ENCODE measurements at regions of chr16 and their contacts with region 1.

Region 1: GRCh38 chr16:77675464-77676324 is 46.6 kb upstream of the NUDT7 start:
- DNase-seq: peak; percentile 75
- H3K4me3 ChIP-seq: no peak overlapping the region
- H3K27ac ChIP-seq: no peak overlapping the region
- H3K4me1 ChIP-seq: no peaks in the 10 kb centered on the region
- H3K27me3 ChIP-seq: no peaks in the 10 kb centered on the region
- CTCF ChIP-seq: peak; percentile 80

Region 2: DNA sequence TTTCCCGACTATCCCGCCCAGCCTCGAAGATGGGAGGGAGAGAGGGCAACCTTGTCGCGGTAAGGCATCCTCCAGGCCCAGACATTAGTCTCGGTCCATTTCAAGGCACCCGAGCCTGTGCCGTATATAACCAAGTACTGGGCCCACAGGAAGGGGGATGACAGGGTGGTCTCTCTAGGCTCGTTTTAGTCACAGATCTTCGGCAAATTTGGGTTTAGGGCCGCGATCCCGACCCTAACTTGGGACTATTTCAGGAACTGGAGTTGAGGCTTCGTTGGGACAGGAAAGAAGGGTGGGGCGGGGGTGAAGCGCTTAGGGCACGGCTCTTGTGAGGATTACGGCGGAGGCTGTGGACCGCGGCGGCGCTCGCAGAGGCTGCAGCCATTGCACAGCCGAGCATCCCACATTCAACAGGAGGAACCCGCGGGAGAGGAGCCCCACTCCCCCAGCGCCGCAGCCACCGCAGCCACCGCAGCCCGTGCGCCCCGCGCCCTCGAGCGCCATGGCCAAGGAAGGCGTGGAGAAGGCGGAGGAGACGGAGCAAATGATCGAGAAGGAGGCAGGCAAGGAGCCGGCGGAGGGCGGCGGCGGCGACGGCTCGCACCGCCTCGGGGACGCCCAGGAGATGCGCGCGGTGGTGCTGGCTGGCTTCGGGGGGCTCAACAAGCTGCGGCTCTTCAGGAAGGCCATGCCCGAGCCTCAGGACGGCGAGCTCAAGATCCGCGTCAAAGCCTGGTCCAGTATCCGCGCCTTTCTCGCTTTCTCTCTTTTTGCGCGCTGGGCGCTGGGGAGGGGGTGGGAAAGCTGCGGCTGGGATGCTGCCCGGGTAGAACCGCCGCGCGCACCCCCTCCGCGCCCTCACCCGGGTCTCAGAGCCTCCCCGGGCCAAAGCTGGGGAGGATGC is 112.7 kb after region 1 on chr16 and contains the start of gene VAT1L:
- intact Hi-C with region 1: loop called (anchors 5 kb)
- DNase-seq: peak; percentile 24
- H3K4me3 ChIP-seq: peak within 1 kb of the TSS; percentile 30
- H3K27ac ChIP-seq: no peak within 1 kb of the TSS
- H3K4me1 ChIP-seq: no peaks in the 10 kb centered on the region
- H3K27me3 ChIP-seq: peaks cover 32% of the 10 kb centered on the region
- CTCF ChIP-seq: no peak
- total RNA-seq, gene VAT1L: 1.4 to 3.3 TPM

Region 3: GRCh38 chr16:77971306-77972271 is 295.9 kb after region 1 on chr16:
- intact Hi-C with region 1: loop called (anchors 1 kb)
- DNase-seq: peak; percentile 82
- H3K4me3 ChIP-seq: no peak overlapping the region
- H3K27ac ChIP-seq: no peak overlapping the region
- H3K4me1 ChIP-seq: no peaks in the 10 kb centered on the region
- H3K27me3 ChIP-seq: no peaks in the 10 kb centered on the region
- CTCF ChIP-seq: peak; percentile 64

Region 4: GRCh38 chr16:78099372-78100161 is 423.9 kb after region 1 on chr16 and contains the start of gene WWOX:
- intact Hi-C with region 1: loop called (anchors 5 kb)
- DNase-seq: peak; percentile 97
- H3K4me3 ChIP-seq: peak within 1 kb of the TSS; percentile 97
- H3K27ac ChIP-seq: peak within 1 kb of the TSS; percentile 88
- H3K4me1 ChIP-seq: no peaks in the 10 kb centered on the region
- H3K27me3 ChIP-seq: no peaks in the 10 kb centered on the region
- CTCF ChIP-seq: peak; percentile 94
- total RNA-seq, gene WWOX: 7.2 to 11.0 TPM